Activated CD4-positive, alpha-beta T cell treated with anti-CD3 and anti-CD28 coated beads for 36 hours (primary cell): ENCODE measurements at regions of chr1 and their contacts with region 1.

Region 1: GRCh38 chr1:113389953-113390834 is at the start of gene MAGI3:
- DNase-seq: peak; percentile 97
- ATAC-seq: peak; percentile 97
- H3K4me3 Mint-ChIP-seq: peak within 1 kb of the TSS; percentile 86
- H3K27ac Mint-ChIP-seq: peak within 1 kb of the TSS; percentile 79
- H3K4me1 Mint-ChIP-seq: peaks cover 23% of the 10 kb centered on the region
- H3K27me3 Mint-ChIP-seq: peaks cover 5% of the 10 kb centered on the region
- total RNA-seq, gene MAGI3: 6.4 to 6.7 TPM

Region 2: DNA sequence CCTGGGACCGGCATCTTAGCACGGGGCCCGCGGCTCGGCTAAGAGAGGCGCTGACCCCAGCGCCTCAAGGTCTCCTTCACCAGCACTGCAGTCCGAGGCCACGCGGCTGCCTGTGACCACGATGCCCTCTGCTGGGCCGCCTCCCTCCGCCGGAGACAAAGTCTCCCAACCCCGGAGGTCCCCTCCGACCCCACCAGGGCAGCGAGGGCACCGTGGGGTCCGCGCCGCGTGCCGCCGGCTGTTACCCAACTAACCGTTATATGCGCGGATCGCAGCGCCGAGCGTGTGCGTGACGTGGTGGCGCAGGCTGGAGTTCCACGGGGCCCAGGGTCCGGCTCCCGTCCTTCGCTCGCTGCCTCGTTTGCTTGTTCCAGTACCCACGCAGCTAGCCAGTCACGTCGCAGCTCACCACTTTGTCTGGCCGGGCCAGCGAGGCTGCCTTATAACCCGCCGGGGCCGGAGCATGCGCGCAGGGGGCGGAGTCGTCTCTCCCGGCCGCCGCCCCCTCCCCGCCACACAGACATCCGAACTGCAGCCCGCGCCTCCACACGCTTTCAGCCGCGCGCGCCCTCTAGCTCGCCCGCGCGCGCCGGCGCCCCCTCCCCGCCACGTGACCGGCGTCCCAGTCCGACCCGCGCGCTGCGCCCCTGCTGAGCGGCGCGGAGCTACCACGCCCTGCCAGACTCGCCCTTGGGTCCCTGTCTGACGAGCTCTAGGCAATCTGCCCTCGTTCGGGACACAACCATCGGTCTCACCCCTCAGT is 434.2 kb before region 1 on chr1 and contains the start of gene SLC16A1:
- CTCF ChIA-PET with region 1: no interaction called
- POLR2A ChIA-PET with region 1: no interaction called
- intact Hi-C with region 1: loop called in 1 of 2 experiments (anchors 2 kb)
- DNase-seq: peak; percentile 96
- ATAC-seq: peak; percentile 75
- H3K4me3 Mint-ChIP-seq: peak within 1 kb of the TSS; percentile 97
- H3K27ac Mint-ChIP-seq: peak within 1 kb of the TSS; percentile 100
- H3K4me1 Mint-ChIP-seq: peaks cover 56% of the 10 kb centered on the region
- H3K27me3 Mint-ChIP-seq: no peaks in the 10 kb centered on the region
- total RNA-seq, gene SLC16A1: 70.0 to 70.4 TPM

Region 3: GRCh38 chr1:113140588-113141446 is 249.4 kb before region 1 on chr1:
- CTCF ChIA-PET with region 1: interaction called, 4 read pairs
- POLR2A ChIA-PET with region 1: no interaction called
- intact Hi-C with region 1: loop called (anchors 5 kb)
- DNase-seq: peak; percentile 78
- ATAC-seq: peak; percentile 86
- H3K4me3 Mint-ChIP-seq: no peak overlapping the region
- H3K27ac Mint-ChIP-seq: no peak overlapping the region
- H3K4me1 Mint-ChIP-seq: peaks cover 33% of the 10 kb centered on the region
- H3K27me3 Mint-ChIP-seq: no peaks in the 10 kb centered on the region

Region 4: GRCh38 chr1:113353581-113353980 is 36.6 kb before region 1 on chr1:
- CTCF ChIA-PET with region 1: no interaction called
- POLR2A ChIA-PET with region 1: no interaction called
- intact Hi-C with region 1: no loop called
- DNase-seq: no peak
- ATAC-seq: no peak
- H3K4me3 Mint-ChIP-seq: no peak overlapping the region
- H3K27ac Mint-ChIP-seq: no peak overlapping the region
- H3K4me1 Mint-ChIP-seq: no peaks in the 10 kb centered on the region
- H3K27me3 Mint-ChIP-seq: peaks cover 6% of the 10 kb centered on the region

Region 5: GRCh38 chr1:113759333-113760101 is 369.3 kb after region 1 on chr1 and contains the start of gene PHTF1:
- CTCF ChIA-PET with region 1: no interaction called
- POLR2A ChIA-PET with region 1: no interaction called
- intact Hi-C with region 1: loop called in 1 of 2 experiments (anchors 1 kb)
- DNase-seq: peak; percentile 77
- ATAC-seq: peak; percentile 81
- H3K4me3 Mint-ChIP-seq: peak within 1 kb of the TSS; percentile 81
- H3K27ac Mint-ChIP-seq: peak within 1 kb of the TSS; percentile 94
- H3K4me1 Mint-ChIP-seq: peaks cover 13% of the 10 kb centered on the region
- H3K27me3 Mint-ChIP-seq: no peaks in the 10 kb centered on the region
- total RNA-seq, gene PHTF1: 11.3 to 12.2 TPM

Region 6: GRCh38 chr1:113871597-113872113 is 481.5 kb after region 1 on chr1 and contains the start of gene PTPN22:
- CTCF ChIA-PET with region 1: no interaction called
- POLR2A ChIA-PET with region 1: no interaction called
- intact Hi-C with region 1: loop called in 1 of 2 experiments (anchors 2 kb)
- DNase-seq: peak; percentile 89
- ATAC-seq: peak; percentile 84
- H3K4me3 Mint-ChIP-seq: peak within 1 kb of the TSS; percentile 84
- H3K27ac Mint-ChIP-seq: peak within 1 kb of the TSS; percentile 99
- H3K4me1 Mint-ChIP-seq: peaks cover 72% of the 10 kb centered on the region
- H3K27me3 Mint-ChIP-seq: no peaks in the 10 kb centered on the region
- total RNA-seq, gene PTPN22: 42.4 to 52.6 TPM